Sigmoid colon (tissue), 7 donors: ENCODE measurements at regions of chr2 and their contacts with region 1.

Region 1: GRCh38 chr2:160397530-160397865 is 96.1 kb downstream of the RBMS1 start:
- DNase-seq: no peak
- H3K4me3 ChIP-seq: no peak overlapping the region
- H3K27ac ChIP-seq: peak overlapping the region in 1 of 4 donors; percentile 23
- H3K4me1 ChIP-seq: peaks cover 0 to 81% (median 64%) of the 10 kb centered on the region in 4 donors
- H3K27me3 ChIP-seq: no peaks in the 10 kb centered on the region
- CTCF ChIP-seq: no peak
- EP300 ChIP-seq: no peak
- POLR2A ChIP-seq: no peak

Region 2: GRCh38 chr2:160166002-160166401 is 231.5 kb before region 1 on chr2:
- intact Hi-C with region 1: no loop called
- DNase-seq: no peak
- H3K4me3 ChIP-seq: no peak overlapping the region
- H3K27ac ChIP-seq: no peak overlapping the region
- H3K4me1 ChIP-seq: no peaks in the 10 kb centered on the region
- H3K27me3 ChIP-seq: no peaks in the 10 kb centered on the region
- CTCF ChIP-seq: no peak
- EP300 ChIP-seq: no peak
- POLR2A ChIP-seq: no peak

Region 3: DNA sequence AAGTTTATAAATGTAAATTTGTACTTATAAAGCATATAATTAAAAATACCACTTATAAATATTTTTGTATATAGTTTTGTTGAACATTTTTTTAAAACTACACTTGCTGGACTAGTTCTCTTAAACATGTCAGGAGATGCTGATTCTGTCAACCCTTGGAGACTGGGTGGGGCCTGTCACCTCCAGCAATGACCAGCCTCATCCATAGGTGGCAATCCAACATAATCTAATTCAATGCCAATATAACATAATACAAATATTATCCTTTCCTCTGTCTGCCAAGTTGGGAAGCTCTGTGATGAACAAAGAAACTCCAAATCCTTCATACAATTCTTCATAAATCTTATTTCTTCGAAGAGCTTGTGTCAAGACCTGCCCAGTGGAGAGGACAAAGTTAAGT is 44.3 kb before region 1 on chr2:
- intact Hi-C with region 1: loop called (anchors 5 kb)
- DNase-seq: no peak
- H3K4me3 ChIP-seq: no peak overlapping the region
- H3K27ac ChIP-seq: peak overlapping the region in 3 of 4 donors; percentile 55 to 77 (median 76)
- H3K4me1 ChIP-seq: peaks cover 0 to 91% (median 84%) of the 10 kb centered on the region in 4 donors
- H3K27me3 ChIP-seq: no peaks in the 10 kb centered on the region
- CTCF ChIP-seq: no peak
- EP300 ChIP-seq: no peak
- POLR2A ChIP-seq: no peak

Region 4: GRCh38 chr2:160538559-160539355 is 141.3 kb after region 1 on chr2:
- intact Hi-C with region 1: no loop called
- DNase-seq: no peak
- H3K4me3 ChIP-seq: no peak overlapping the region
- H3K27ac ChIP-seq: no peak overlapping the region
- H3K4me1 ChIP-seq: peaks cover 0 to 8% (median under 1%) of the 10 kb centered on the region in 4 donors
- H3K27me3 ChIP-seq: no peaks in the 10 kb centered on the region
- CTCF ChIP-seq: no peak
- EP300 ChIP-seq: no peak
- POLR2A ChIP-seq: no peak